WTC11 (cell line): ENCODE measurements at regions of chr16 and their contacts with region 1.

Region 1: GRCh38 chr16:51151961-51152663 is 1.0 kb upstream of the SALL1 start:
- DNase-seq: peak; percentile 88
- ATAC-seq: peak; percentile 60
- H3K4me3 Mint-ChIP-seq: peak overlapping the region; percentile 64
- H3K27ac Mint-ChIP-seq: no peak overlapping the region; the same call in 1 of the 2 replicates
- H3K4me1 Mint-ChIP-seq: peaks cover 49% of the 10 kb centered on the region
- H3K27me3 Mint-ChIP-seq: peaks cover 21% of the 10 kb centered on the region
- CTCF ChIP-seq: no peak

Region 2: GRCh38 chr16:51181503-51181811 is 29.3 kb after region 1 on chr16:
- CTCF ChIA-PET with region 1: interaction called, 8 read pairs
- POLR2A ChIA-PET with region 1: interaction called, 10 read pairs
- DNase-seq: peak; percentile 53
- ATAC-seq: peak; percentile 81
- H3K4me3 Mint-ChIP-seq: peak overlapping the region; percentile 35
- H3K27ac Mint-ChIP-seq: peak overlapping the region; percentile 95
- H3K4me1 Mint-ChIP-seq: peaks cover 63% of the 10 kb centered on the region
- H3K27me3 Mint-ChIP-seq: no peaks in the 10 kb centered on the region; the same call in 1 of the 2 replicates
- CTCF ChIP-seq: no peak

Region 3: GRCh38 chr16:51276336-51276735 is 124.2 kb after region 1 on chr16:
- CTCF ChIA-PET with region 1: no interaction called
- POLR2A ChIA-PET with region 1: no interaction called
- DNase-seq: no peak
- ATAC-seq: no peak
- H3K4me3 Mint-ChIP-seq: no peak overlapping the region
- H3K27ac Mint-ChIP-seq: no peak overlapping the region
- H3K4me1 Mint-ChIP-seq: peaks cover 2% of the 10 kb centered on the region; the same call in 1 of the 2 replicates
- H3K27me3 Mint-ChIP-seq: peaks cover 7% of the 10 kb centered on the region; the same call in 1 of the 2 replicates
- CTCF ChIP-seq: no peak

Region 4: GRCh38 chr16:51392521-51393187 is 240.5 kb after region 1 on chr16:
- CTCF ChIA-PET with region 1: no interaction called
- POLR2A ChIA-PET with region 1: interaction called, 12 read pairs
- DNase-seq: peak; percentile 21
- ATAC-seq: peak; percentile 6
- H3K4me3 Mint-ChIP-seq: peak overlapping the region; percentile 45
- H3K27ac Mint-ChIP-seq: peak overlapping the region; percentile 95
- H3K4me1 Mint-ChIP-seq: peaks cover 54% of the 10 kb centered on the region
- H3K27me3 Mint-ChIP-seq: no peaks in the 10 kb centered on the region; the same call in 1 of the 2 replicates
- CTCF ChIP-seq: no peak